Motor neuron (in vitro differentiated cells): ENCODE measurements at regions of chr7 and their contacts with region 1.

Region 1: GRCh38 chr7:85023045-85023712 is 163.7 kb downstream of the SEMA3D start:
- ATAC-seq: no peak
- H3K4me3 ChIP-seq: no peak overlapping the region
- H3K27ac ChIP-seq: no peak overlapping the region
- H3K4me1 ChIP-seq: peaks cover 0 to 5% of the 10 kb centered on the region in 2 donors

Region 2: GRCh38 chr7:83957333-83957732 is 1065.8 kb before region 1 on chr7:
- in situ Hi-C with region 1: loop called in 4 of 9 experiments (anchors 25 kb)
- ATAC-seq: peak in 2 of 8 experiments; percentile 36 to 65
- H3K4me3 ChIP-seq: no peak overlapping the region
- H3K27ac ChIP-seq: no peak overlapping the region
- H3K4me1 ChIP-seq: no peaks in the 10 kb centered on the region

Region 3: GRCh38 chr7:84194543-84195271 is 828.5 kb before region 1 on chr7 and contains the start of gene SEMA3A:
- in situ Hi-C with region 1: loop called in 2 of 9 experiments (anchors 10 to 25 kb)
- ATAC-seq: peak; percentile 79 to 91 (median 88)
- H3K4me3 ChIP-seq: peak within 1 kb of the TSS; percentile 39 to 53 (median 48)
- H3K27ac ChIP-seq: peak within 1 kb of the TSS in 1 of 2 donors; percentile 10
- H3K4me1 ChIP-seq: peaks cover 7 to 17% of the 10 kb centered on the region in 2 donors
- total RNA-seq, gene SEMA3A: 8.9 to 100 (median 16.4) TPM

Region 4: DNA sequence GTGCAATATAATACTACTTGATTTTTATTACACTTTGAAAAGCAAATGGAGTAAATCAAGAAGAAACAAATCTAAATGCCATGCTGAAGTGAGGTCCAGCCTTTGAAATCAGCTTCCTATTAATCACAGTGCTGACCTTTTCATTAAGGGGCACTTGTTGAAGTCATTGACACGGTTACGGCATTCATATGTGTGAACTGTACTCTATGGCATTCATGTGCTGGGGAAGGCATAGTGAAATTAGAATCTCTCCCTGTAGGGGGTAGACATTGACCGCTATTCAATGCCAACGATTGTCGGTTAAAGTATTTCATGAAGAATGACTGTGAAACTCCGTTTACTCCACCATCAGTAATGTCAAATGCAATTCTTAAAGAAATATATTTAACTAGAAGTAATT is 532.5 kb before region 1 on chr7:
- in situ Hi-C with region 1: loop called in 3 of 9 experiments (anchors 10 to 25 kb)
- ATAC-seq: peak in 6 of 8 experiments; percentile 29 to 96 (median 74)
- H3K4me3 ChIP-seq: peak overlapping the region in 1 of 5 donors; percentile 17
- H3K27ac ChIP-seq: no peak overlapping the region
- H3K4me1 ChIP-seq: peaks cover 2 to 21% of the 10 kb centered on the region in 2 donors

Region 5: GRCh38 chr7:85737426-85737825 is 714.2 kb after region 1 on chr7:
- in situ Hi-C with region 1: no loop called
- ATAC-seq: no peak
- H3K4me3 ChIP-seq: no peak overlapping the region
- H3K27ac ChIP-seq: no peak overlapping the region
- H3K4me1 ChIP-seq: no peaks in the 10 kb centered on the region